Common myeloid progenitor, CD34-positive (primary cell): ENCODE measurements at regions of chr22 and their contacts with region 1.

Region 1: DNA sequence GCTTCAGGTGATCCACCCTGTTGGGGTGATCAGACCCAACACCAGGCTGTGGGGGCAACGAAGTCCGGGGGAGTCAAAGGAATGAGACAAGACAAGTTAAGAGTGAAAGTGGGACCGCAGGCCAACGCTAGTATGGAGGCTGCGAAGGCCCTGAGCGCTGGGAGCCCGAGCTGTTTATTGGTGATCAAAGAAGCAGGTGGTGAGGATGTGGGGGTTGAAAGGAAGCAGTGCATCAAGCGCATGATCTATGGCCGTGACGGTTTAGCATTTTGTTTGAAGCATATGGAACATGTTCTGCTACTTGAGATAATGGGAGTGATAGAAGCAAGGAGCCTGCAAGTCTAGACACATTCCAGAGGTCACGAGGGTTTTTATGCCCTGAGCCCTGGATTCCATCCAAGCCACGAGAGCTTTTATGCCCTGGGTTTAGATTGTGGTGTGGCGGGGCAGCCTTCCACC is 49.5 kb downstream of the MCHR1 start:
- DNase-seq: peak; percentile 48 to 74 (median 66)
- H3K4me3 ChIP-seq: no peak overlapping the region
- H3K27ac ChIP-seq: peak overlapping the region in 1 of 2 experiments; percentile 32
- H3K4me1 ChIP-seq: peaks cover 0 to 51% (median 27%) of the 10 kb centered on the region in 4 experiments
- H3K27me3 ChIP-seq: no peaks in the 10 kb centered on the region

Region 2: DNA sequence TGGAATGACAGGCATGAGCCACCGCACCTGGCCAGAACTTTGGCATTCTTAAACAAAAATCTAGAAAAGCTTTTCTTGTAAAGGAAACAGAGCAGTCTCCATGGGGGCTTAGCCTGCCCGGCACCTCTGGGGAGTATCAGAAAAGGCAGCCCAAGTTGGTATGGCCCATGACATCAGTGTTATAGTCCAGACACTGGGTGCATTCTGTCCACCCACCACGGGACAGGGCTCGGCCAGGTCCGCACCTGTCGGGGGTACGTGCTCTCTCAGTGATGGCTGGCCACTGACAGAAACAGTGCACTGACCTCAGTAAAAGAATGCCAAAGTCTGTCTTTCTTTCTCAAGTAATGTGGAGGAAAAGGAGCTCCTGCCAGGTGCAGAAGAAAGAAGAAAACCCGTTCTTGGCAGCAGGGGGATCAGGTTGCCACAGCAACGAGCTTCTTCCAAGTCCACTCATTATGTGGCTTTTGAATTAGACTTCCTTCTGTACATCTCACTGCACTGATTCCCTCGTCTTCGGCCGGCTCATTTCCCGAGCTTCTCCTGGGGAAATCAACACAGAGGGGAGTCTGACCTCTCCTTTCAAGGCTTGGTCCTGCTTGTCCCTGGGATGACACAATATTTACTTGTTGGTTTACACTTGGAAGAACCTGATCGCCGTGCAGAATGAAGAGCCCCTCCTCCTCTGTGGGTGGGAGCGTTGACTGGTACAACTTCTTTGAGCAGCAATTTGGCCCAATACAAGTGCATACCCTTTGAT is 14.4 kb before region 1 on chr22:
- CTCF ChIA-PET with region 1: interaction called, 24 read pairs
- POLR2A ChIA-PET with region 1: interaction called, 4 read pairs
- DNase-seq: peak in 2 of 3 donors; percentile 73 to 80
- H3K4me3 ChIP-seq: peak overlapping the region in 2 of 7 experiments; percentile 29 to 45
- H3K27ac ChIP-seq: no peak overlapping the region
- H3K4me1 ChIP-seq: peaks cover 0 to 39% (median 29%) of the 10 kb centered on the region in 4 experiments
- H3K27me3 ChIP-seq: peaks cover 0 to 1% (median 0%) of the 10 kb centered on the region in 5 experiments

Region 3: GRCh38 chr22:40826984-40827741 is 98.4 kb after region 1 on chr22:
- CTCF ChIA-PET with region 1: no interaction called
- POLR2A ChIA-PET with region 1: no interaction called
- DNase-seq: no peak
- H3K4me3 ChIP-seq: no peak overlapping the region
- H3K27ac ChIP-seq: no peak overlapping the region
- H3K4me1 ChIP-seq: peaks cover 0 to 6% (median 0%) of the 10 kb centered on the region in 4 experiments
- H3K27me3 ChIP-seq: no peaks in the 10 kb centered on the region